ENCODE measurements at regions of chr10 and their contacts with region 1.

Region 1: GRCh38 chr10:97553575-97554031 is 19.0 kb upstream of the ANKRD2 start:
- DNase-seq: peak; percentile 35
- H3K4me3 ChIP-seq: no peak overlapping the region
- H3K27ac ChIP-seq: no peak overlapping the region
- H3K4me1 ChIP-seq: no peaks in the 10 kb centered on the region
- H3K27me3 ChIP-seq: no peaks in the 10 kb centered on the region
- CTCF ChIP-seq: peak; percentile 32 to 82 (median 71)
- POLR2A ChIP-seq: no peak

Region 2: DNA sequence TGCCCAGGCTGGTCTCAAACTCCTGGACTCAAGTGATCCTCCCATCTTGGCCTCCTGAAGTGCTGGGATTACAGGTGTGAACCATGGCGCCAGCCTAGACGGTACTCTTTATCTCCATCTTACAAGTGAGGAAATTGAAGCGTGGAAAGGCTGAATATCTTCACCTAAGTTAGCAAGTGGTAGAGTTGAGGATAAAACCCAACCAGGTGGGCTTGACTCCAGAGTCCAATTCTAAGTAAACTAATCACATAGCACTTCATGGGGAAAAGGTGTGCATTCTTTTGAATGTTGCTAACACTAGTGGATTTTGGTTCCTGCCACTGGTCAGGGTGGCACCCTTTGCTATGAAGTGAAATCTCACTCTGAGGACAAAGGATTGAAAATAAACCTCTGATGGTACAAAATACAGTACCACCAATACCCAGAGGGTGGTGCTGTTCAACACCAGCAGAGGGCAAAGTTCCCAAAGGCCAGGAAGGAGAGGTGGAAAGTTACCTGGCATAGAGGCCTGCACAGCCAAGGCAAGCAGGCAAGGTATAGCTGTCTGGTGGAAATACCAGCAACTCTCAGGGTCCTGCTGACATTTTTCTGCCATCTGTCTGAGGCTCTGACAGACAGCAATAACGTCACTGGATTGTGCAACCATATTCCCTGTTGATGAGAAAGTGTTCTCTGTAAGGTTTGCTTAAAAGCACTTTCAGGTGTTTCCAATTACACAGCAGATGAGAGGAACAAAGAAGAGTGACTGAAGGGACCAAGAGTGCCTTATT is 90.1 kb before region 1 on chr10:
- intact Hi-C with region 1: loop called (anchors 2 kb)
- DNase-seq: peak; percentile 55
- H3K4me3 ChIP-seq: no peak overlapping the region
- H3K27ac ChIP-seq: peak overlapping the region in 1 of 2 donors; percentile 9
- H3K4me1 ChIP-seq: peaks cover 4% of the 10 kb centered on the region
- H3K27me3 ChIP-seq: no peaks in the 10 kb centered on the region
- CTCF ChIP-seq: peak; percentile 68 to 90 (median 82)
- POLR2A ChIP-seq: no peak

Region 3: DNA sequence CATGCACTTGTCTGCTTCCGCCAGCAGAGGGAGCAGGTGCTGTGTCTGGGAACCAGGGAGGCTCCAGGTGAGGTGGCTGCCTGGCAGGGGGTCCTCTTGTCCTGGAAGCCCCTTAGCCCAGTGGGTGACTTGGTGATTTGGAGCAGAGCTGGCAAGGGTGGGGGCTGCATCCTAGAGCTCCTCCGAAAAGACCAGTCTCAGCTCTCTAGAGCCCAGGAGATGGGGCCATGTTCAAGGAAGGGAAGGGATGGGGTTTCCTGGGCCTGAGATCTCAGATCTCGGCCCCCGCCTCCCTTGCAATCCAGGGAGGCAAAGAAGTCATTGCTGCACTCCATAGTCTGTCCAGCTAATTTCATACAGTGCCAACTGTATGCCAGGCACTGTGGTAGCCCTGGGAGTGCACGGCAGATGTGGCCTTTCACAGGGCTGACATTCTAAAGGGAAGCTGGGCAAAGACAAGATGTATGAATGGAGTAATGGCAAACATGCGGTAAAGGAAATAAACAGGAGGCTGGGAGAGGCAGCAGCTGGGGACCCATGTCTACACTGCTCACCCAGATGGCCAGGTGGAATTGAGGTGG is 238.6 kb after region 1 on chr10:
- intact Hi-C with region 1: no loop called
- DNase-seq: peak; percentile 63
- H3K4me3 ChIP-seq: no peak overlapping the region
- H3K27ac ChIP-seq: no peak overlapping the region
- H3K4me1 ChIP-seq: no peaks in the 10 kb centered on the region
- H3K27me3 ChIP-seq: peaks cover 5% of the 10 kb centered on the region
- CTCF ChIP-seq: peak; percentile 70 to 87 (median 78)
- POLR2A ChIP-seq: no peak